ENCODE measurements at regions of chrX and their contacts with region 1.

Region 1: DNA sequence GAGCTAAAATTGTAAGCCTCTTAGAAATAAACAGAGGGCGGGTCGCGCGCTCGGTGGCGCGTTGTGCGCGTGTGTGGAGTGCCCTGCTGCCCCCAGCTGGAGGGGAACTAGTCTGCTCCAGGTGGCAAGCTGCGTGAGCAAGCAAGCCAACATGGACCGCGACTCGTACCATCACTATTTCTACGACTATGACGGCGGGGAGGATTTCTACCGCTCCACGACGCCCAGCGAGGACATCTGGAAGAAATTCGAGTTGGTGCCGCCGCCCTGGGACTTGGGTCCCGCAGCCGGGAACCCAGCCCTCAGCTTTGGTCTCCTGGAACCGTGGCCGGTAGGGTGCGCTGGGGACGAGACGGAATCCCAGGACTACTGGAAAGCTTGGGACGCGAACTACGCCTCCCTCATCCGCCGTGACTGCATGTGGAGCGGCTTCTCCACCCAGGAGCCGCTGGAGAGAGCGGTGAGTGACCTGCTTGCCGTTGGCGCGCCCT is 66.1 kb downstream of the DNAAF6 start:
- DNase-seq: no peak
- ATAC-seq: no peak
- H3K4me3 ChIP-seq: no peak overlapping the region
- H3K27ac ChIP-seq: no peak overlapping the region
- H3K4me1 ChIP-seq: no peaks in the 10 kb centered on the region
- H3K27me3 ChIP-seq: peaks cover 5% of the 10 kb centered on the region; the same call in 1 of the 2 replicates
- CTCF ChIP-seq: no peak
- POLR2A ChIP-seq: no peak
- RAD21 ChIP-seq: no peak

Region 2: DNA sequence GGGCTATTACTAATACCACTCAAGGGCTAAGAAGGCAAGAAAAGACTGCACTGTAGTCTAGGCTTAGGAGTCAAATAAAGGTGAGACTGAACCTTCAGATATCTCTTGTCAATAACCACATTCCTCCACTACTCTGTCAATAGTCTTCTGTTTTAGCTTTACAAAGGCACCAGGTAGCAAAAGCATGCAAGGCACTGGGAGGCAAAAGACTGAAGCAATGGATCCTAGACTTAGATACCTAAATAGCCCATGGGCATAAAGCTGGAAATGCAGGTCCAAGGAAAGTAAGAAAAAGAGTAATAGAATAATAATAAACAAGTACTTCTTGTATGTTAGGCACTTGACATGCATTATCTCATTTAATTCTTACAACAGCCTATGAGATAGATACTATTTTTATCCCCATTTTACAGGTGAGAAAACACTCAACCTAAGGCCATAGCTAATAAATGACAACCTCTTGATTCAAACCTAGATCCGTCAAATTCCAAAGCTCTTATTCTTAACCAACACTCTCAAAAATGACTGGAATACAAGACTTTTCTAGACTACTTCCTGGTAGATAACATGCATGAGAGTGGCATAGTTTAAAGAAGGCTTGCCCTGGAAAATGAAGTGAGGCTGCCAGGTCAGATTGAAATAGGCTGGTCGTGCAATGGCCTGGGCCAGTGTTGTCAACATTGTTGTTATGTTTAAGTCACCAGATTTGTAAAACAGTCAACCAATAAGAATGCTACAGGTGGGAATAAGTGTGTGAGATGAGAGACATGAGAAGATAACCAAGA is 20.4 kb after region 1 on chrX:
- CTCF ChIA-PET with region 1: no interaction called
- POLR2A ChIA-PET with region 1: no interaction called
- dilution Hi-C with region 1: no loop called
- in situ Hi-C with region 1: no loop called
- intact Hi-C with region 1: loop called (anchors 1 kb)
- DNase-seq: no peak
- ATAC-seq: no peak
- H3K4me3 ChIP-seq: no peak overlapping the region
- H3K27ac ChIP-seq: no peak overlapping the region
- H3K4me1 ChIP-seq: no peaks in the 10 kb centered on the region
- H3K27me3 ChIP-seq: no peaks in the 10 kb centered on the region; the same call in none of the 2 replicates
- CTCF ChIP-seq: no peak
- POLR2A ChIP-seq: no peak
- RAD21 ChIP-seq: no peak

Measured in IMR-90 (cell line).